HEK293 (cell line): ENCODE measurements at regions of chr6 and their contacts with region 1.

Region 1: DNA sequence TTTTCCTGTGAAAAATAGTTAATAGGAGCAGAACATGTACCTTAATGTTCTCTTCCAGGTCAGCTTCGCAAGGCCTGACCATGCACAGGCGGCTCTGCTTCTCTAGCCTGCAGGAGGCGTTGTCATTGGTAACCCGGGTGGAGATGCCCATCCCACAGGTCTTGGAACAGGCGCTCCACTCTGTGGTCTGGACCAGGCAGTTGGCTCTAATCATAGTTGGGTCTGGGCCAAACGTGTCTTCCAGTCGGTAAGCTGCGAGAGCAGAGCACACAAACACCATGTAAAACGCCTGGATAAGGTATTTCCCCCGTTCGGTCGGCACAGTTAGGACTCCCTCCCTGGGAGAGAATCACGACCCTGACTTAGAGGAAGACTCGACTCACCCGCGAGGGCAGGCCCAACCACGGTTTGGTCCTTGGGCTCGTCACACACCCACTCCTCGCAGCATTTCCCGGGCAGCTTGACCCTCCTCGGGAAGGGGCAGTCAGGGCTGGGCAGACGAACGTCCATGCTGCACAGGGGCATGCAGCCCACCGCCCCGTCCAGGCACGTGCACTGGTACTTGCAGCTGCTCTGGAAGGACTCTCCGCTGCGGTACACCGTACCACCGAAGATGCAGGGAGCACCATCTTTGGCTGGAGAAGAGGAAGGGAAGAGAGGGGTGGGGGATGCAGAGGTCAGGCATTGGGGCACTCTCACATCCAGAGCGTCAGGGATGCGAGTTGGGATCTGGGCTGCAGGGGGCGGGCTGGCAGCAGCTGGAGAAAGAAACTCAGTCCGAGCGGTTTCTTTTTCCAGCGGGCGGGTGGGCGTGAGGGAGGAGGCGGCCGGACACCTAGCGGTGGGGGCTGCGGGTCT is 1.0 kb downstream of the CCN2 start:
- H3K4me3 ChIP-seq: peak overlapping the region; percentile 73
- H3K27ac ChIP-seq: peak overlapping the region; percentile 74; the same call in 1 of the 2 replicates
- H3K4me1 ChIP-seq: peaks cover 23% of the 10 kb centered on the region
- CTCF ChIP-seq: peak; percentile 95

Region 2: GRCh38 chr6:131929264-131929663 is 20.9 kb before region 1 on chr6:
- CTCF ChIA-PET with region 1: interaction called, 113 read pairs
- POLR2A ChIA-PET with region 1: interaction called, 10 read pairs
- H3K4me3 ChIP-seq: no peak overlapping the region
- H3K27ac ChIP-seq: no peak overlapping the region
- H3K4me1 ChIP-seq: no peaks in the 10 kb centered on the region
- CTCF ChIP-seq: no peak

Region 3: DNA sequence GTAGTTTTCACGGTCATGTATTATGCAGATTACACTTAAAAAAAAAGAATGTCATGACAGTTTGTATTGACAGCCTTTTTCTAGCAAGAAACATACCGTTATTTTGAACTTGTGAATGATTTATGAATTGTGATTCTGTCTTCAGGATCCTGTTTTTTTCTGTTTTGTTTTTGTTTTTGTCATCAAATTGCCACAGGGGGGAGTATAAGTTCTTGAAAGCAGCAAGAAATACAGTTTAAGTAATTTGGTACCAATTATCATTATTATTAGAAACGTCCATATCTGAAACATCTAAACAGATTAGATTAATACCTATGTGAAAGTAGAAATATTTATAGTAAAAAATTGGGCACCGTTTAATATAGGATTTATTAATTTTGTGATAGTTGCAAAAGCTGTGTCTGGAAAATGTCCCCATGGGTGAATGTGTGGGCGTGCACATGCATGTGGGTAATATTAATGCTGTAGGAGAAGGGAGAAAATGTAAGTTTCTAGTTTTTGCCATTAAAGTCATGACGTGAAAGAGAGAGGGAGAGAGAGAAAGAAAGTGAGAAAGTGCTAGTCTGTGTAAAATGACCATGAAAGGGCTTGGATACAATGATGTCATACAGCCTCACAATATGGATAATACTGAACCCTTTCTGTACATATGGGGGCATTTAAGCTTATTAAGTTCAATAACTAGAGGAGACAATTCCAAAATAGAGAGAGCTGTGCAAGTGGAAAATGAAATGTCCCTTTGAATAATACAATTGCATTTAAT is 10.4 kb after region 1 on chr6:
- CTCF ChIA-PET with region 1: interaction called, 6 read pairs
- POLR2A ChIA-PET with region 1: interaction called, 23 read pairs
- H3K4me3 ChIP-seq: no peak overlapping the region
- H3K27ac ChIP-seq: no peak overlapping the region
- H3K4me1 ChIP-seq: no peaks in the 10 kb centered on the region; the same call in 1 of the 2 replicates
- CTCF ChIP-seq: no peak

Region 4: DNA sequence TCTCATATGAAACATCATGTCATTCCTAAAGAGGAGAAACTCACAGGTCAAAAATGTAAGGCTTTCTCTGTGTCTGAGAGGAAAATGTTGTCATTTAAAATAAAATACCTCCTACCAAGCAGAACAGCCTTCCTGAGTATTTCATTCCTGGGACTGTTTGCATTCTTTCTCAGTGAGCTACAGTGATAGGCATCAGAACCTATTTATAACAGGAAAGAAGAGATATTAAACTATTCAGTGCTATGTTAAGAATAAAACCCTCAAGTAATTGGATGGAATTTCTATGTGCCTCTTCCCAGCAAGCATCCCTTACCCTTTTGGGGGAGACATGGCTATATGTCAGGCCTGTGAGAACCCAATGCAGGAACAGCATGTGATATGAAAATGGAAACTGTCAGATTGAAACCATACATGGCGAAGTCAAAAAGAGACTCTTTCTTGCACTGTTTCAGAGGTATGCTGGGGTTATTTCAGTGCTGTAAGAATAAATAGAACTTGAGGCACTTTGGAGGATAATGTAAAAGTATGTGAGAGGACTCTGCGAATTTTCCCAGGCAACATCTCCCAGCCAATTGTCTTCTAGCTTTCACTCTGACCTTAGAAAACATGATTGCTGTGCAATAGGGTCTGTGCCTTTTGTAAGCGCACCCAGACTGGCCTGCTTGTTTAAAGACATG is 134.8 kb after region 1 on chr6:
- CTCF ChIA-PET with region 1: no interaction called
- POLR2A ChIA-PET with region 1: interaction called, 14 read pairs
- H3K4me3 ChIP-seq: no peak overlapping the region
- H3K27ac ChIP-seq: no peak overlapping the region
- H3K4me1 ChIP-seq: 0 out of 2 replicates have a peak, but pooled peaks cover 5% of the 10 kb centered on the region
- CTCF ChIP-seq: no peak

Region 5: GRCh38 chr6:132512638-132513632 is 562.8 kb after region 1 on chr6 and contains the start of gene STX7:
- CTCF ChIA-PET with region 1: interaction called, 6 read pairs
- POLR2A ChIA-PET with region 1: interaction called, 12 read pairs
- H3K4me3 ChIP-seq: peak within 1 kb of the TSS; percentile 85
- H3K27ac ChIP-seq: peak within 1 kb of the TSS; percentile 6; the same call in 1 of the 2 replicates
- H3K4me1 ChIP-seq: peaks cover 5% of the 10 kb centered on the region
- CTCF ChIP-seq: no peak